ENCODE measurements at regions of chr12 and their contacts with region 1.

Region 1: GRCh38 chr12:121888478-121889266 is at the start of gene PSMD9:
- DNase-seq: peak; percentile 99
- H3K4me3 ChIP-seq: peak within 1 kb of the TSS; percentile 84
- H3K27ac ChIP-seq: peak within 1 kb of the TSS; percentile 86
- H3K4me1 ChIP-seq: peaks cover 39% of the 10 kb centered on the region
- CTCF ChIP-seq: peak; percentile 83
- total RNA-seq, gene PSMD9: 135 and 142 TPM in 2 replicates

Region 2: DNA sequence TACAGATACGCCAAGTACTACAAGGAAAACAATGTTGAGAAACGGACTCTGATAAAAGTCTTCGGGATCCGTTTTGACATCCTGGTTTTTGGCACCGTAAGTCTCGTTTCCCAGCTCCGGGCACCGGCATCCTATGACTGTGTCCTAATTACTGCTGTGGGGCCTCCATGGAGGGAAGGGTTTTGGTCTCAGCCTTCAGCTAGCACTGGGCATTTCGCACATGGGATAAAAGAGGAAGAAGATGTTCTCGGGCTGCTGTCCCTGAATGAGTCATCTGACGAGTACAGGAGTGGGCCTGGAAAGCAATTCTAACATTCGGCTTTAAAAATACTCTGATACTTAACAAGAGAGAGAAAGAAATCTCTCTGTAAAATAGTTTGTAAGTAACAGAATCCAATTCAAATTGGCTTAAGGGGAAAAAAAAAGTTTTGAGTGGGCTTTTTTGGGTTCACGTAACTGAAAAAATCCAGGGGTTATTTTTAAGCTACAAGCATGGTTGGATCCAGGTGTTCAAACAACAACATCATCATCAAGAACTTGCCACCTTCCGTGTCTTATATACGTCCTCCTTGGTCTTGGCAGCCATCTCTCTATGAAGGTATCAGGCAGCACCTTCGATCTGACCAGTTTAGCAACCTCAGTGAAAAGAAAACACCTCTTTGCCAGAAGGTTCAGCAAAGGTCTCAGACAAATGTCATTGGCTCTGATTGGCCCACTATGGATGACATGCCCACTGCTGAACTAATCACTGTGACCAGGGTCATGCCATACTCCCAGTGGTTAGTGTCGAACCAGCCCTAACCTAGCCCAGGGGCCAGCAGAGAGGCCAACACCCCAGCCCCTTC is 713.1 kb before region 1 on chr12:
- CTCF ChIA-PET with region 1: no interaction called
- POLR2A ChIA-PET with region 1: no interaction called
- intact Hi-C with region 1: no loop called
- DNase-seq: peak; percentile 48
- H3K4me3 ChIP-seq: no peak overlapping the region
- H3K27ac ChIP-seq: no peak overlapping the region
- H3K4me1 ChIP-seq: peaks cover 23% of the 10 kb centered on the region
- CTCF ChIP-seq: no peak

Region 3: GRCh38 chr12:121697098-121697698 is 191.5 kb before region 1 on chr12:
- CTCF ChIA-PET with region 1: no interaction called
- POLR2A ChIA-PET with region 1: interaction called, 5 read pairs
- intact Hi-C with region 1: loop called (anchors 5 kb)
- DNase-seq: peak; percentile 77
- H3K4me3 ChIP-seq: no peak overlapping the region
- H3K27ac ChIP-seq: no peak overlapping the region
- H3K4me1 ChIP-seq: no peaks in the 10 kb centered on the region
- CTCF ChIP-seq: peak; percentile 90

Region 4: DNA sequence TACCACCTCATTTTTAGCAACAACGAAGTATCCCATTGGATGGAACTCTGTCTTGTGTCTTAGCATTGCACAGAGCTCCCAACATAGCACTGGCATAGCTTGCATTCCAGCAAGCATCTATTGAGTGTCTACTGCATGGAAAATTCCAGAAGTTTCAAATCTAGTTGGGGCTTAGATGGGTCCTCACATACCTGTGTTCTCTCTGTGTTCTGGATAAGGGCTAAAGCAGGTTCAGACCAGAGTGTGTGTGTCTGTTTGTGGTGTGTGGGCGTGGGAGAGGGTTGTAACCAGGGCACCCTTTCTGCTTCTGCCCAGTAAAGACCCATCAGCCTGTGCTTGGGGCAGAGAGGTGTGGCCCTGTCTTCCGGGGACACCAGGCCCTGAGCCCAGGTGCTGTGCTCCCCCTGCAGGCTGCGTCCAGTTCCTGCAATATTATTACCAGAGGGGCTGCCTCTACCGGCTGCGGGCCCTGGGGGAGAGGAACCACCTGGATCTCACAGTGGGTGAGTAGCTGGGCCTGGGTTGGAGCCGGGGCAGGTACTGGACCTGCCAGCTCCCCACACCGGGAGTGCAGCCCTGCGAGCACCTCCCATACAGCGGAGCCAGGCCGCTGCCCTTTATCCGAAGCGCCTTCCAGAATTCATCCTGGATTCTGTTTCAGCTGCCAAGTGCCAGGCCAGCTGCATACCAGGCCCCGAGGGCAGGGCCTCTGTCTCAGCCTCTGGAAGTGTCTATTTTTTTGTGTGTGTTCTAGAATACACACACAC is 115.5 kb before region 1 on chr12:
- CTCF ChIA-PET with region 1: no interaction called
- POLR2A ChIA-PET with region 1: no interaction called
- intact Hi-C with region 1: loop called (anchors 1 kb)
- DNase-seq: peak; percentile 89
- H3K4me3 ChIP-seq: no peak overlapping the region
- H3K27ac ChIP-seq: no peak overlapping the region
- H3K4me1 ChIP-seq: peaks cover 29% of the 10 kb centered on the region
- CTCF ChIP-seq: peak; percentile 90

Region 5: GRCh38 chr12:121811434-121812319 is 77.0 kb before region 1 on chr12:
- CTCF ChIA-PET with region 1: no interaction called
- POLR2A ChIA-PET with region 1: no interaction called
- intact Hi-C with region 1: loop called (anchors 1 kb)
- DNase-seq: peak; percentile 70
- H3K4me3 ChIP-seq: peak overlapping the region; percentile 72
- H3K27ac ChIP-seq: peak overlapping the region; percentile 62
- H3K4me1 ChIP-seq: peaks cover 45% of the 10 kb centered on the region
- CTCF ChIP-seq: peak; percentile 96

Region 6: DNA sequence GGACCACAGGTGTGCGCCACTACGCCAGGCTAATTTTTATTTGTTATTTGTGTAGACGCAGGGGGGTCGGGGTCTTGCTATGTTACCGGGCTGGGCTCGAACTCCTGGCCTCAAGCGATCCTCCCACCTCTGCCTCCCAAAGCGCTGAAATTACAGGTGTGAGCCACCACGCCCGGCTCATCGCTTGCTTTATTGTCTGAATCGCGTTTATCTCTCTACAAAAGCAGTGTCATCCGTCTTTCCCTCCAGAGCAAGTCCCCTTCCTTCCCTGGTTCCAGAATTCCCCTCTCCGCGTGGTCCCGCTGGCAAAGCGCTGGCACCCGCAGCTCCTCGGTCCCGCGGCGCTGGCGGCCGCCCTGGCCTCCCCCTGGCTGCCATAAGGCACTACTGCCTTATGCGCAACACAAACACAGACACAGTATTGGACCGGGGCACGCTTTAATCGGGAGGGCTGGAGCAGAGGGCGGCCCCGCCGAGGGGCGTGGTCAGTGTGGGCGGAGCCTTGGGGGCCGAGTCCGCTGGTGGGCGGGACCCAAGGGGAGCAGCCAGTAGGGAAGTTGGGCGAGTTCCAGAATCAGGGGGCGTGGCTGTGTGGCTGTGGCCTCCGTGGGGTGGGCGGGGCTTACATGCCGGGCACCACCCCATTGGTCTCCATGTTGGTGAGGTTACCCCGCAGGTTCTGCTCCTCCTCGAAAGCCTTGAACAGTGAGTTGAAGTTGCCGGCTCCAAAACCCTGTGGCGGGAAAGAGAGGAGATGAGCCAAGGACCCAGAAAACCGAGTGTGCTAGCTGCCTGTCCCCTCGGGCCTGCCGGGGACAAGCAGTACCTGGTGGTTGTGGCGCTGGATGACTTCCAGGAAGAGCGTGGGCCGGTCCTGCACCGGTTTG is 49.3 kb before region 1 on chr12:
- CTCF ChIA-PET with region 1: no interaction called
- POLR2A ChIA-PET with region 1: interaction called, 3 read pairs
- intact Hi-C with region 1: loop called (anchors 2 kb)
- DNase-seq: peak; percentile 99
- H3K4me3 ChIP-seq: peak overlapping the region; percentile 71
- H3K27ac ChIP-seq: no peak overlapping the region
- H3K4me1 ChIP-seq: peaks cover 13% of the 10 kb centered on the region
- CTCF ChIP-seq: 0 out of 2 replicates have a peak, but pooled peaks have one; percentile 35

Region 7: GRCh38 chr12:122051231-122051876 is 162.7 kb after region 1 on chr12:
- CTCF ChIA-PET with region 1: no interaction called
- POLR2A ChIA-PET with region 1: no interaction called
- intact Hi-C with region 1: no loop called
- DNase-seq: no peak
- H3K4me3 ChIP-seq: no peak overlapping the region
- H3K27ac ChIP-seq: no peak overlapping the region
- H3K4me1 ChIP-seq: no peaks in the 10 kb centered on the region
- CTCF ChIP-seq: no peak

Measured in OCI-LY7 (cell line).